ENCODE measurements at regions of chr7 and their contacts with region 1.

Region 1: DNA sequence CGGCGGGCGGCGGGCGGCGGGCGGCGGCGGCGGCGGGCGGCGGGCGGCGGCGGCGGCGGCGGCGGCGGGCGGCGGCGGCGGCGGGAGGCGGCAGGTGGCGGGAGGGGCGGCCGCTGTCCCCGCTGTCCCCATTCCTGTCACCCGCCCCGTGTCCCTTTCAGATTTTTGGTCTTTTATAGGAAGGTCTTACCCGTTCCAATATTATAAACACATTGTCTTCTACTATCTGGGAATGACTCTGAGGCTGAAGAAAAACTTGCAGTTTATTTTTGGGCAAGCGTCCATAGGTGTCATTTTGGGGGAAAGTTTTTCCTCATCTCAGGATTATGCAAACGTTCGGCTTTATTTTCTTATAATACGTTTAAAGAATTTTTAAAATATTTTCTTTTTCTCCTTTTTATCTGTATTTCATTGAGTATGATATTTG is 578 bp downstream of the ZNF713 start:
- DNase-seq: peak in 2 of 9 donors; percentile 2 to 6
- ATAC-seq: no peak
- H3K4me3 ChIP-seq: peak overlapping the region; percentile 46
- H3K4me3 Mint-ChIP-seq: peak overlapping the region; percentile 82 to 89 (median 86)
- H3K27ac ChIP-seq: peak overlapping the region; percentile 61
- H3K27ac Mint-ChIP-seq: peak overlapping the region; percentile 83 to 94 (median 90)
- H3K4me1 ChIP-seq: no peaks in the 10 kb centered on the region
- H3K4me1 Mint-ChIP-seq: peaks cover 0 to 10% (median 5%) of the 10 kb centered on the region in 7 donors
- H3K27me3 ChIP-seq: no peaks in the 10 kb centered on the region
- H3K27me3 Mint-ChIP-seq: no peaks in the 10 kb centered on the region

Region 2: DNA sequence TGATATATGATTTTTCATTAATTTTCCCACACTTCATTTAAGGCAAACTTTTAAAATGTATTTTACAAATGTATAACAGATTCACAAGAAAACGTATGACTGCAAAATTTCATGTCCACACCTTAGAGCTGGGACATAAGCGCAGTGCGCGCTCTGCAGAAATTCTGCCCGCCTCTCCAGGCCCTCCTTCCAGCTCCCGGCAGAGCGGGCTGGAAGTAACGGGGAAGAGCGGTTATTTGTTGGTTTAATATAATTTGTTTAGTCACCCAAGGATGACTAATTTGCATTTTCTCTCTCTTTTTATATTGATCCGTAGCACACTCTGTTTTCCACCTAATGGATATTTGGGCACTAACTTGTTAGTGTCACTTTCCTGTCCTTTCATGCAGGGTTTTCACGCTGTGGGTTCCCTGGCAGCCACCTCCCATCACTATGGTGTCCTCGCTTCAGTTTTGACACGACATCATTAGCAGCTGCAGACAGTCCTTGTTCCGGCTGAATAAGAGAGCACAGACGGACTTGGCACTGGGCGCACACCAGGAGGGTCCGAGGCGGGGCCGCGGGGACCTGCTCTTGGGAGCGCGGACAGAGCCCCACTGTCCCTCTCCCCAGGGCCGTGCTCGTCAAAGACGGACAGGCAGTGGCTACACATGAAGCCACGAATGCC is 999.6 kb before region 1 on chr7:
- CTCF ChIA-PET with region 1: no interaction called
- POLR2A ChIA-PET with region 1: no interaction called
- intact Hi-C with region 1: no loop called
- DNase-seq: no peak
- ATAC-seq: no peak
- H3K4me3 ChIP-seq: no peak overlapping the region
- H3K4me3 Mint-ChIP-seq: no peak overlapping the region
- H3K27ac ChIP-seq: no peak overlapping the region
- H3K27ac Mint-ChIP-seq: no peak overlapping the region
- H3K4me1 ChIP-seq: no peaks in the 10 kb centered on the region
- H3K4me1 Mint-ChIP-seq: no peaks in the 10 kb centered on the region
- H3K27me3 ChIP-seq: no peaks in the 10 kb centered on the region
- H3K27me3 Mint-ChIP-seq: peaks cover 13 to 46% (median 27%) of the 10 kb centered on the region in 5 donors

Region 3: GRCh38 chr7:55951637-55952351 is 64.0 kb after region 1 on chr7 and contains the start of gene MRPS17:
- CTCF ChIA-PET with region 1: no interaction called
- POLR2A ChIA-PET with region 1: no interaction called
- intact Hi-C with region 1: loop called (anchors 1 kb)
- DNase-seq: peak; percentile 86 to 96 (median 94)
- ATAC-seq: peak; percentile 100
- H3K4me3 ChIP-seq: peak within 1 kb of the TSS; percentile 68
- H3K4me3 Mint-ChIP-seq: peak within 1 kb of the TSS; percentile 84 to 99 (median 96)
- H3K27ac ChIP-seq: peak within 1 kb of the TSS; percentile 86
- H3K27ac Mint-ChIP-seq: peak within 1 kb of the TSS; percentile 92 to 98 (median 96)
- H3K4me1 ChIP-seq: peaks cover 0 to 4% of the 10 kb centered on the region in 2 donors
- H3K4me1 Mint-ChIP-seq: peaks cover 10 to 33% (median 24%) of the 10 kb centered on the region in 7 donors
- H3K27me3 ChIP-seq: no peaks in the 10 kb centered on the region
- H3K27me3 Mint-ChIP-seq: peaks cover 0 to 2% (median 0%) of the 10 kb centered on the region in 5 donors
- total RNA-seq, gene MRPS17: 8.3 to 16.7 (median 12.0) TPM

Region 4: DNA sequence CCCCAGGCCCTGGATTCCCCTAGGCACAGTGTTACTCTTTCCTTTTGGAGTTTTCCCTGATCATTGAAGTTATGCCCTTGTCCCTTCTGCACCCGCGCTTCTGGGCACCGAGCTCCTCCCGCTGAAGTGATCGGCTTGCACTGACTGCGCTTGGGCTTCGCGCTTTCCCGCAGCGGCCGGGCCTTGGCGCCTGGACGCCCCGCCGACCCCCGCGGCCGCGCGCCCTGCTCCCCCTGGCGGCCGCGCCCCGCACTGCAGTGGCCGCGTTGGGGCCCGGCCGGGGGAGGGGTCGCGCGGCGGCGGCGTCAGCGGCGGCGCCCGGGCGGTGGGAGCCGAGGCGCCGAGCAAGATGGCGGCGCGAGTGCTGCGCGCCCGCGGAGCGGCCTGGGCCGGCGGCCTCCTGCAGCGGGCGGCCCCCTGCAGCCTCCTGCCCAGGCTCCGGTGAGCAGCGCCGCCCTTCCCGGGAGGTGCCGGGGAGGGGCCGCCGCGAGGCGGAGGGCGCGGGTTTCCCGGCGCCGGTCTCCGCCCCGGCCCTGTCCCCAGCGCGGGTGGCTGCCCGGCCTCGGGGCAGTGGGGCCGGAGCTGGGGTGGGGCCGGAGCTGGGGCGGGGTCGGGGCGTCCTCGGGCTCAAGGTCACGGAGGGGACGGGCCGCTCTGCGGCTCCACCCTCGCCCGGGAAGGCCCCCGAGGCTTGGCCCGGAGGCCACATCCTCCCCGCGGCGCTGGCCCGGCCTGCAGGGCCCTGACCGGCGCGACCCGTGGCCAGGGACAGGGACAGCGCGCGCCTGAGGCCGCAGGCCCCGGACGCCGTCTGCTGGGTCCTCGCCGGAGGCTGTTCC is 76.6 kb after region 1 on chr7 and contains the start of gene NIPSNAP2:
- CTCF ChIA-PET with region 1: interaction called, 3 read pairs
- POLR2A ChIA-PET with region 1: interaction called, 4 read pairs
- intact Hi-C with region 1: loop called (anchors 1 kb)
- DNase-seq: peak; percentile 37 to 86 (median 68)
- ATAC-seq: peak; percentile 94
- H3K4me3 ChIP-seq: peak within 1 kb of the TSS; percentile 50
- H3K4me3 Mint-ChIP-seq: peak within 1 kb of the TSS; percentile 79 to 91 (median 88)
- H3K27ac ChIP-seq: peak within 1 kb of the TSS; percentile 89
- H3K27ac Mint-ChIP-seq: peak within 1 kb of the TSS; percentile 89 to 94 (median 91)
- H3K4me1 ChIP-seq: peaks cover 10% of the 10 kb centered on the region in 2 donors
- H3K4me1 Mint-ChIP-seq: peaks cover 24 to 55% (median 42%) of the 10 kb centered on the region in 7 donors
- H3K27me3 ChIP-seq: no peaks in the 10 kb centered on the region
- H3K27me3 Mint-ChIP-seq: no peaks in the 10 kb centered on the region
- total RNA-seq, gene NIPSNAP2: 30.1 to 37.8 (median 34.4) TPM

Region 5: GRCh38 chr7:56063882-56064625 is 176.2 kb after region 1 on chr7 and contains the start of gene SUMF2:
- CTCF ChIA-PET with region 1: no interaction called
- POLR2A ChIA-PET with region 1: no interaction called
- intact Hi-C with region 1: loop called in 1 of 2 experiments (anchors 5 kb)
- DNase-seq: peak; percentile 86 to 96 (median 93)
- ATAC-seq: peak; percentile 96
- H3K4me3 ChIP-seq: peak within 1 kb of the TSS; percentile 98
- H3K4me3 Mint-ChIP-seq: peak within 1 kb of the TSS; percentile 83 to 95 (median 92)
- H3K27ac ChIP-seq: peak within 1 kb of the TSS; percentile 88
- H3K27ac Mint-ChIP-seq: peak within 1 kb of the TSS; percentile 93 to 98 (median 96)
- H3K4me1 ChIP-seq: peaks cover 7 to 8% of the 10 kb centered on the region in 2 donors
- H3K4me1 Mint-ChIP-seq: peaks cover 16 to 37% (median 22%) of the 10 kb centered on the region in 7 donors
- H3K27me3 ChIP-seq: no peaks in the 10 kb centered on the region
- H3K27me3 Mint-ChIP-seq: peaks cover 0 to 2% (median 0%) of the 10 kb centered on the region in 5 donors
- total RNA-seq, gene SUMF2: 120 to 176 (median 122) TPM

Measured in naive thymus-derived CD4-positive, alpha-beta T cell (primary cell).